Colonic mucosa (tissue), 4 donors: ENCODE measurements at regions of chr1 and their contacts with region 1.

Region 1: GRCh38 chr1:9196129-9197040 is 38.2 kb upstream of the H6PD start:
- DNase-seq: peak; percentile 78
- H3K4me3 ChIP-seq: no peak overlapping the region
- H3K27ac ChIP-seq: no peak overlapping the region
- H3K4me1 ChIP-seq: peaks cover 3% of the 10 kb centered on the region
- H3K27me3 ChIP-seq: peaks cover 46% of the 10 kb centered on the region
- CTCF ChIP-seq: peak; percentile 83

Region 2: DNA sequence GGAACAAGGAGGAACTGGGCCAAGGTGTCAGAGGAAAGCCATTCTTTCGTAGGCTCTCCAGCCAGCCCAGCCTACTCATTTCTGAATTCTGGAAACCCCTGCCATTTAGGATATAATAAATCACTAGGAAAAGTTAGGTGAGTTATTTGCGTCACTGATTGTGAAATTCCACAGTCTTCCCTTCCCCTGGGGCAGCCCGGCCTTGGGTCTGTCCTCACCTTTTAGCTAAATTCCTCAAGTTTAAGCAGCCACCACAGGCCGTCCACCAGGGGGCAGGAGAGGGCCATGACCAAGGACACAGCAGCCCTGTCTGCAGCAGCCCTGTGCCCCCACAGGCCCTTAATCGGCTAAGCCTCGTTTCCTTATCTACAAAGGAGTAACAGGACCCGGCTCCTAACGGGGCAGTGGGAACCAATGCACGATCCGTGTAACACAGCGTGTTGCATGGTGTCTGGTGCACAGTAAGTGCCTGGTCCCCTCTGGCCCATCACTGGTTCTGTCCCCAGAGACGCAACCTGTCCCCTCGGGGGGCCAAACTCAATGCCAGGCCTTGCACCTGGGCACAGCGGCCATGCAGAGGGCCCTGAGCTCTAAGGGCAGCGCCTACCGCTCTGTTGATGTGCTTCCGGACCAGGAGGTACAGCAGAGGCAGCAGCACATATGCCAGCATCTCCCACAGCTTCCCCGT is 85.6 kb before region 1 on chr1:
- intact Hi-C with region 1: loop called (anchors 2 kb)
- DNase-seq: peak; percentile 89
- H3K4me3 ChIP-seq: no peak overlapping the region
- H3K27ac ChIP-seq: no peak overlapping the region
- H3K4me1 ChIP-seq: peaks cover 8% of the 10 kb centered on the region
- H3K27me3 ChIP-seq: no peaks in the 10 kb centered on the region
- CTCF ChIP-seq: peak; percentile 91

Region 3: DNA sequence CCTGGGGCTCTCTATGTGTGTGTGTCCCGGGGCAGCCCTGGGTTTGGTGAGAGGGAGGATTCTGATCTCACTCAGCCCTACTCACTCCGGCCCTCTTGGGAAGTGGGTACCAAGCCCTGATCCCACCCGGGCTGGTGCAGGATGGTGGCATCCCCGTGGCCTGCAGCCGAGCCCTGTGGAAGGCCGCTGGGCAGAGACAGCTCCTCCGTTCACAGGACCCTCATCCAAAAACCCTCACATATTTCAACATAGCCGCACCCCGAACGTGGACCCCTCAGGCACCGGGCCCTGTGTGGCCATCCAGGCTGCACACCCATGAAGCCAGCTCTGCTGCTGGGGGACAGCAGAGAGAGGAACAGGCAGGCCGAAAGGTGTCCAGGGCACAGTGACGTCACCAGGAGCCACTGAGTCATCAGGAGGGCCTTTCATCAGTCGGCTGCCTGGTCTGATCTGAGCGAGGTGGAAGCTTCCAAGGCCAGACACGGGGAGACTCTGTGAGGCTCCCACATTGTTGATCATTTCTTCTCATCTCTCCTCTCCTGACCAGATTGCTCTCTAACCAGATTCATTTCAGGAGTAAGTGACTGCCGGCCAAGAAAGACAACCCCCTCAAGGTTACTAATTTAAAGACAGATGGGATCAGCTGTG is 51.2 kb before region 1 on chr1:
- intact Hi-C with region 1: loop called (anchors 1 kb)
- DNase-seq: no peak
- H3K4me3 ChIP-seq: no peak overlapping the region
- H3K27ac ChIP-seq: no peak overlapping the region
- H3K4me1 ChIP-seq: no peaks in the 10 kb centered on the region
- H3K27me3 ChIP-seq: no peaks in the 10 kb centered on the region
- CTCF ChIP-seq: no peak